PC-3 (cell line): ENCODE measurements at regions of chr12 and their contacts with region 1.

Region 1: GRCh38 chr12:74317078-74317601 is 220.5 kb upstream of the ATXN7L3B start:
- DNase-seq: peak; percentile 72
- ATAC-seq: peak; percentile 98
- H3K4me3 ChIP-seq: no peak overlapping the region
- H3K27ac ChIP-seq: no peak overlapping the region
- H3K4me1 ChIP-seq: peaks cover 6% of the 10 kb centered on the region; the same call in 1 of the 2 replicates
- H3K27me3 ChIP-seq: no peaks in the 10 kb centered on the region
- CTCF ChIP-seq: peak; percentile 81

Region 2: GRCh38 chr12:72346363-72346944 is 1970.7 kb before region 1 on chr12:
- CTCF ChIA-PET with region 1: no interaction called
- POLR2A ChIA-PET with region 1: no interaction called
- intact Hi-C with region 1: loop called (anchors 5 kb)
- DNase-seq: peak; percentile 93
- ATAC-seq: peak; percentile 97
- H3K4me3 ChIP-seq: no peak overlapping the region
- H3K27ac ChIP-seq: no peak overlapping the region
- H3K4me1 ChIP-seq: peaks cover 22% of the 10 kb centered on the region
- H3K27me3 ChIP-seq: no peaks in the 10 kb centered on the region
- CTCF ChIP-seq: peak; percentile 82

Region 3: DNA sequence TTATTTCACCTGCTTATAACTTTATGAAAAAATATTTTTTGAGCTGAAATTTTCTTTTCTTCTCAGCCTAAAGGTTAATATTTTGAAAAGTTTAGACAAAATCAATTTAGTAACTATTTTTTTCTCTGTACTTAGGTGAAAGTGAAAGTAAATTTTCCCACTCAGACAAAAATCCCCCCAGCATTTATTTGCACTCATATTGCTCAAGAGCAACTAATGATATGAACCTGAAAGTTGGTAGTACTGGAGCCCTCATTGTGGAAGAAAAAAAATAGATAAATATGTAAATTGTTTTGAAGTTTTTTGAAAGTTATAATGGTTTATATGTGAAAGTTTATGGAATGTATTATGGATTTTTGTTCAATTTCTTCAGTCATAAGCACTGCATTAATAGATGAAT is 785.4 kb before region 1 on chr12:
- CTCF ChIA-PET with region 1: no interaction called
- POLR2A ChIA-PET with region 1: no interaction called
- intact Hi-C with region 1: loop called (anchors 5 kb)
- DNase-seq: no peak
- ATAC-seq: no peak
- H3K4me3 ChIP-seq: no peak overlapping the region
- H3K27ac ChIP-seq: no peak overlapping the region
- H3K4me1 ChIP-seq: no peaks in the 10 kb centered on the region
- H3K27me3 ChIP-seq: no peaks in the 10 kb centered on the region
- CTCF ChIP-seq: no peak

Region 4: DNA sequence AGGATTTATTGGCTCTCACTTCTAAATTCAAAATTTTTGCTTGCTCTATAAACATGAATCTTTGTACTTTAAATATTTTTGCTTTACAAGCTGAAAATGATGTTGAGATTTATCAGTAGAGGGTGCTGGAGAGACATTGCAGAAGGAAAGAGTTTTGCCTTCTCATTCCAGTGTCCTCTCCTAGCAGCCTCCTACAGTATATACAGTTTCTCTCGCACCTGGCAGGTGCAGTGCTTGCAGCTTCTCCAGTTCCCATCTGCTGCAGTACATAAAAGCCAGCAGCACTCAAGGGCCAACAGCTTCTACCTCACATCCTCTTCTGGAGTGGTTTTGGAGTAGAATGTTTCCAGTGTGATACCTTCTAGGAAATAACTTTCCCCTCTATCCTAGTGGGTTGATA is 381.3 kb before region 1 on chr12:
- CTCF ChIA-PET with region 1: interaction called, 6 read pairs
- POLR2A ChIA-PET with region 1: no interaction called
- intact Hi-C with region 1: loop called (anchors 1 kb)
- DNase-seq: peak; percentile 57
- ATAC-seq: peak; percentile 78
- H3K4me3 ChIP-seq: no peak overlapping the region
- H3K27ac ChIP-seq: no peak overlapping the region
- H3K4me1 ChIP-seq: no peaks in the 10 kb centered on the region
- H3K27me3 ChIP-seq: no peaks in the 10 kb centered on the region
- CTCF ChIP-seq: peak; percentile 68

Region 5: GRCh38 chr12:74021937-74022336 is 295.2 kb before region 1 on chr12:
- CTCF ChIA-PET with region 1: interaction called, 9 read pairs
- POLR2A ChIA-PET with region 1: no interaction called
- intact Hi-C with region 1: loop called (anchors 1 kb)
- DNase-seq: peak; percentile 84
- ATAC-seq: peak; percentile 100
- H3K4me3 ChIP-seq: no peak overlapping the region
- H3K27ac ChIP-seq: no peak overlapping the region
- H3K4me1 ChIP-seq: no peaks in the 10 kb centered on the region
- H3K27me3 ChIP-seq: no peaks in the 10 kb centered on the region
- CTCF ChIP-seq: peak; percentile 92

Region 6: GRCh38 chr12:74111688-74112360 is 205.3 kb before region 1 on chr12:
- CTCF ChIA-PET with region 1: no interaction called
- POLR2A ChIA-PET with region 1: no interaction called
- intact Hi-C with region 1: loop called (anchors 1 kb)
- DNase-seq: peak; percentile 58
- ATAC-seq: peak; percentile 70
- H3K4me3 ChIP-seq: no peak overlapping the region
- H3K27ac ChIP-seq: no peak overlapping the region
- H3K4me1 ChIP-seq: no peaks in the 10 kb centered on the region
- H3K27me3 ChIP-seq: no peaks in the 10 kb centered on the region
- CTCF ChIP-seq: peak; percentile 76

Region 7: DNA sequence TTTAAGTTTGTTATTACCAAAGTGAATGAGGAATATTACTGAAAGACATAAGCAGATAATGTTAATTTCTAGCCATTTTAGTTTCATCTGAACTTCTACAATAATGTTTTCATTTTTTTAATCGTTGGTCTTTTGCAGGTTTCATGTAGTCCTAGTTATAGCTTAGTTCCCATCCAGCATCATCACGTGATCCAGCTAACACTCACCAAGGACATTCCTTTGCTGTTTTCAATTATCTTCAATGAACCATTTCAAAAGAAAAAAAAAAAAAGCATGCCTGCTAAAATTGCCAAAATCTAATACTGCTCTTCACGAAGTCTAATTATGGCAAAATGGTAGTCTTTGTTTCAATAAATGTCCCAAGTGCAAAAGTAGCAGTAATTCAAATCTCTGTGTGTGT is 32.8 kb after region 1 on chr12:
- CTCF ChIA-PET with region 1: no interaction called
- POLR2A ChIA-PET with region 1: no interaction called
- intact Hi-C with region 1: no loop called
- DNase-seq: no peak
- ATAC-seq: no peak
- H3K4me3 ChIP-seq: no peak overlapping the region
- H3K27ac ChIP-seq: 0 out of 2 replicates have a peak overlapping the region, but pooled peaks have one; percentile 13
- H3K4me1 ChIP-seq: peaks cover 11% of the 10 kb centered on the region
- H3K27me3 ChIP-seq: no peaks in the 10 kb centered on the region
- CTCF ChIP-seq: no peak

Region 8: GRCh38 chr12:74537707-74538385 is 220.7 kb after region 1 on chr12 and contains the start of gene ATXN7L3B:
- CTCF ChIA-PET with region 1: no interaction called
- POLR2A ChIA-PET with region 1: no interaction called
- intact Hi-C with region 1: loop called (anchors 2 kb)
- DNase-seq: peak; percentile 97
- ATAC-seq: peak; percentile 94
- H3K4me3 ChIP-seq: peak within 1 kb of the TSS; percentile 94
- H3K27ac ChIP-seq: peak within 1 kb of the TSS; percentile 85
- H3K4me1 ChIP-seq: peaks cover 29% of the 10 kb centered on the region
- H3K27me3 ChIP-seq: no peaks in the 10 kb centered on the region
- CTCF ChIP-seq: no peak
- total RNA-seq, gene ATXN7L3B: 23.7 and 25.5 TPM in 2 replicates